Heart left ventricle (tissue), 16 donors: ENCODE measurements at regions of chr4 and their contacts with region 1.

Region 1: GRCh38 chr4:70687821-70688794 is at the start of gene UTP3:
- DNase-seq: peak; percentile 96 to 97 (median 97)
- ATAC-seq: peak; percentile 97 to 99 (median 98)
- H3K4me3 ChIP-seq: peak within 1 kb of the TSS; percentile 69 to 98 (median 90)
- H3K27ac ChIP-seq: peak within 1 kb of the TSS; percentile 84 to 97 (median 92)
- H3K4me1 ChIP-seq: peaks cover 4 to 48% (median 32%) of the 10 kb centered on the region in 12 donors
- H3K27me3 ChIP-seq: no peaks in the 10 kb centered on the region
- CTCF ChIP-seq: peak; percentile 95 to 100 (median 96)
- POLR2A ChIP-seq: peak in 1 of 2 donors; percentile 48
- total RNA-seq, gene UTP3: 7.3 to 22.4 (median 17.4) TPM

Region 2: DNA sequence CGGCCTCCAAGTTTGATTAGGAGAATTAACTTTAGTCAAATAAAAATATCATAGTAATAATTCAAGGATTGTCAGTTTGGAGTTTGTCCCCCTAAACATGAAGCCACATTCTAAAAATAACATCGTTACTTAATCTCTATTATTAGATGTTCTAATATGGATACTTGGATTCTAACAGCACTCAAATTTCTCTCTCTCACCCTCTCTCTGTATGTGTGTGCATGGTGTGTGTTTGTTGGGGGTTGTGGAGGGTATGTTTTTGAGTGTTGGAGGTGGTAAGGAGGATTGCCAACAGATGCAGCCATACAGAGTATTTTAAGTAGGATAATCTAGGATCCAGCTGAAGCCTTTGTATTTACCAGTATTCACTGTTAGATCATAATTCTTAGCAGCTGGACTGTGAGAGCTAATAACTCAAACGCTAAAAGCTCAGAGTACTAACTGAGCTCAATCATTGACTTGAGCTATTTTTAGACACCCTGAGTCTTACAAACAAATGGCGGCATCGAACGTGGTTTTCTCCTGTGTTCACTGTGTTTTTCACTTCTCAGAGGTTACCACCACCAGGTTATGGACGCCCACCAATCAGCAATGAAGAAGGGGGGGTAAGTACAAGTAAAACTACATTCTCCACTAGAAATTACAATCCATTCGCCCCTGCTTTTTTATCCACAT is 50.7 kb before region 1 on chr4:
- intact Hi-C with region 1: loop called in 1 of 10 experiments (anchors 5 kb)
- DNase-seq: no peak
- ATAC-seq: peak; percentile 75 to 90 (median 90)
- H3K4me3 ChIP-seq: peak overlapping the region in 9 of 12 donors; percentile 9 to 40 (median 29)
- H3K27ac ChIP-seq: peak overlapping the region; percentile 41 to 85 (median 70)
- H3K4me1 ChIP-seq: peaks cover 0 to 16% (median 0%) of the 10 kb centered on the region in 12 donors
- H3K27me3 ChIP-seq: no peaks in the 10 kb centered on the region
- CTCF ChIP-seq: no peak
- POLR2A ChIP-seq: no peak

Region 3: DNA sequence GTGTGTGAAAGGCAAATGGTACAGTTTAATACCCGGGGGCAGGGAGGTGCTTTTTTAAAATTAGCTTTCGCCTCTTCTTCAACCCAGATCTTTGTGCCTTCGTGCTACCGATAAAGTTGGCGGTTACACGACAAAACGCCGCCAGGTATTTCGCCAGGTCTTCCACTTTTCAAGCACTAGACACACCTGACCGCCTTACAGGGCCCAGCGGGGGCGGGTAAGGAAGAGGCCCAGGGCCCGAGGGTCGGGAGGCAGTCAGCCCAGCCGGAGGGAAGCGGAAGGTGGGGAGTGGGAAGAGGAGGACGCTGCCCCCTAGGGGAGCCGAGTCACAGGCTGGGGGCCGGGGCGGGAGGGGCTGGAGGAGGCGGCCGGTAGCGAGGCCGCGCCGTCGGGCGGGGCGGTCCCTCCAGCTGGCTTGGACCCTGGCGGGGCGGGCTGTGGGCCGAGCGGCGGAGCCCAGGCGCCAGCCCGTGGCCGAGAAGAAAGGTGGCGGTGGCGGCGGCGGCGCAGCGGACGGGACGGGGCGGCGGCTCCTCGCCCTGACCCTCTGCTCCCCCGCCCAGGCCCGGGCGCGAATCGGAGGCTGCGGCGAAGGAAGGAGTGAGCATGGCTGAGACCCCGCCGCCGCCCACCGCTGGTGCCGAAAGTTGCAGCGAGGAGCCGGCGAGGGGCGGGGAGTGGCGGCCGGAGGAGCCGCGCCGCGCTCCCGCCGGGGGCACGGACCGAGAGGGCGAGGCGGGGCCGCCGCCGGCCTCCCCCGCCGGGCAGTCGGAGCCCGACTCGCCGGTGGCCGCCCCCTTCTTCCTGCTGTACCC is 16.4 kb after region 1 on chr4:
- intact Hi-C with region 1: loop called in 6 of 10 experiments (anchors 1 to 2 kb)
- DNase-seq: peak; percentile 89 to 91 (median 90)
- ATAC-seq: peak; percentile 83 to 94 (median 88)
- H3K4me3 ChIP-seq: peak overlapping the region; percentile 71 to 93 (median 84)
- H3K27ac ChIP-seq: peak overlapping the region; percentile 84 to 98 (median 95)
- H3K4me1 ChIP-seq: peaks cover 0 to 25% (median 15%) of the 10 kb centered on the region in 12 donors
- H3K27me3 ChIP-seq: no peaks in the 10 kb centered on the region
- CTCF ChIP-seq: peak in 8 of 12 donors; percentile 14 to 55 (median 42)
- POLR2A ChIP-seq: peak in 1 of 2 donors; percentile 51

Region 4: GRCh38 chr4:70901984-70902576 is 214.0 kb after region 1 on chr4 and contains the start of gene MOB1B:
- intact Hi-C with region 1: loop called in 1 of 10 experiments (anchors 5 kb)
- DNase-seq: peak; percentile 89 to 93 (median 93)
- ATAC-seq: peak; percentile 93 to 98 (median 98)
- H3K4me3 ChIP-seq: peak within 1 kb of the TSS; percentile 70 to 98 (median 84)
- H3K27ac ChIP-seq: peak within 1 kb of the TSS; percentile 75 to 94 (median 92)
- H3K4me1 ChIP-seq: peaks cover 0 to 26% (median 9%) of the 10 kb centered on the region in 12 donors
- H3K27me3 ChIP-seq: no peaks in the 10 kb centered on the region
- CTCF ChIP-seq: peak in 10 of 12 donors; percentile 10 to 65 (median 46)
- POLR2A ChIP-seq: peak in 1 of 2 donors; percentile 61
- total RNA-seq, gene MOB1B: 11.1 to 22.9 (median 18.6) TPM

Region 5: GRCh38 chr4:70993181-70994068 is 305.3 kb after region 1 on chr4 and contains the start of gene DCK:
- intact Hi-C with region 1: loop called in 2 of 10 experiments (anchors 1 to 5 kb)
- DNase-seq: peak; percentile 92 to 96 (median 93)
- ATAC-seq: peak; percentile 96 to 99 (median 98)
- H3K4me3 ChIP-seq: peak within 1 kb of the TSS; percentile 40 to 93 (median 81)
- H3K27ac ChIP-seq: peak within 1 kb of the TSS; percentile 71 to 95 (median 87)
- H3K4me1 ChIP-seq: peaks cover 0 to 54% (median 18%) of the 10 kb centered on the region in 12 donors
- H3K27me3 ChIP-seq: no peaks in the 10 kb centered on the region
- CTCF ChIP-seq: peak in 1 of 12 donors; percentile 29
- POLR2A ChIP-seq: peak in 1 of 2 donors; percentile 72
- total RNA-seq, gene DCK: 4.6 to 12.6 (median 6.8) TPM

Region 6: GRCh38 chr4:71009890-71010588 is 321.9 kb after region 1 on chr4:
- intact Hi-C with region 1: loop called in 1 of 10 experiments (anchors 5 kb)
- DNase-seq: no peak
- ATAC-seq: peak in 1 of 4 donors; percentile 56
- H3K4me3 ChIP-seq: no peak overlapping the region
- H3K27ac ChIP-seq: no peak overlapping the region
- H3K4me1 ChIP-seq: peaks cover 0 to 18% (median 0%) of the 10 kb centered on the region in 12 donors
- H3K27me3 ChIP-seq: no peaks in the 10 kb centered on the region
- CTCF ChIP-seq: peak; percentile 57 to 79 (median 64)
- POLR2A ChIP-seq: no peak